ENCODE measurements at regions of chr14 and their contacts with region 1.

Region 1: DNA sequence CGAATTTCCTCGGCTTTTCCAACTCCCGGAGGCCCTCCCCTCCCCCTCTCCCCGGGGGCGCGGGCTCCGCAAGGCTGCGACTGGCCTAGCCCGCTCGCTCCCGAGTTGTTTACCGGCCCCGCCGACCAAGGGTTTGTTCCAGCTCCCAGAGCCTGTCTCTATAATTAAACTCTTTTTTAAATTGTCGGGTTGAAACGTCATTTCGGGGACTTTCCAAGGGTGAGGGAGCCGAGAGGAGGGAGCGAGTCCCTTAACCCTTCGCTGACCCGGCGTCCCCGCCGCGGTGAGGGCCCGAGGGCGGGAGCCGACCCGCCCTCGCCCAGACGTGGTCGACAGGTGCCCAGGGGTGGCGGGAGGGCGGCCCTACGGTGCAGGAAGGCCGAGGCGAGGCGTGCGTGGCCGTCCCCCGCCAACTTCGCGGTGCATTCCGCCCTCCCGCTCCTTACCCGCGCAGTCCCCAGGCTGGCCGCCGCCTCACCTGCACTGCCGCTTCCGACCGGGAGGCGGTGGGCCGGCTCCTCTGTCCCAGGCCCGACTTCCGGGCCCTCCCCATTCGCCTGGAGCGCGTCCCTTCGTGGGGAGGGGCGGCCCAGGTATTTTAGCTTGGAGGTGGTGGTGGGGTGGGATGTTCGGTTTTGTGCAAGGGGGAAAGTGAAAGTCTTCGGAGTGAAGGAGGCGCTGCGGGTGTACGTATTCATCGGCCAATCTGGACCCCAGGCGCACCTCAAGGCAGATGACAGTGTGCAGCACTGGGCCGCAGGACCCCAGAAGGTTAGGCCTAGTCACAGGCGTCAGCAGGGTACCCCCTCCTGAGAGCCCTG is 2.9 kb upstream of the ZFP36L1 start:
- DNase-seq: peak; percentile 59 to 86 (median 78)
- H3K4me3 ChIP-seq: peak overlapping the region; percentile 64 to 97 (median 77)
- H3K4me3 Mint-ChIP-seq: peak overlapping the region; percentile 95 to 100
- H3K27ac ChIP-seq: peak overlapping the region; percentile 97 to 98
- H3K27ac Mint-ChIP-seq: peak overlapping the region; percentile 94 to 100 (median 99)
- H3K4me1 ChIP-seq: peaks cover 20 to 37% of the 10 kb centered on the region in 2 donors
- H3K4me1 Mint-ChIP-seq: peaks cover 23% of the 10 kb centered on the region
- H3K27me3 ChIP-seq: no peaks in the 10 kb centered on the region
- H3K27me3 Mint-ChIP-seq: peaks cover 10 to 23% (median 10%) of the 10 kb centered on the region in 3 donors
- CTCF ChIP-seq: peak; percentile 87

Region 2: DNA sequence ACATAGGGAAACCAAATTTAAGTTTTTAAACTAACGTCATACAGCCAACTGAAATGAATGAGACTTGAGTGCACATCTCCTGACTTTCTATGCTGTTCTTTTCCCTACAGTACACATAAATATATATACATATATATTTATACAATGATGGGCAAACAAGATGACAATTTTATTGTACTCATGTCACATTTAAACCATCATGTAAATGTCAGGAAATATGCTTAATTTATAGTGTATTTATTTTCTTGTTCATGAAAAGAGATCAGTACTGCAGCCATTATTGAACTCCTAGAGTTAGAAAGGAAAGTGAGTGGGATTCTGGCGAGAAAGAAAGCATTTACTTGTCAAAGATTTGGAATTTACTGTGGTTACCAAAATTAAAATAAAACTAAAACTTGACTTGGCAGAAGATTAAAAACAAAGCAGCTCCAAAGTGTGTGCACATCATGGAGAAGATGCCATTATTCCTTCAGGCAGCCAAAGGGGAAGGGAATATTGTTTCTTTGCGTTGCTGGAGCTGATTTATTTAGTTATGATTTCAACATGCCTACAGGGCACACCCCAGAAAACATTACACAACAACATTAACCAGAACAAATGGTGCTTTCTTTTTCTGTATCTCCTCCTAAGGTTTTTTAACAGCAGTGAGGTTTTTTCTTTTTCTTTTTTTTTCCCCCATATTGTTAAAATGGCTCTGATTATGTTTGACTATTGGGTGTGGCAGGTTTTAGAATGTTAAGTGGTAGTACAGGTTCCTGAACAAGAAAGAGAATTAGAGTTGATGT is 831.7 kb before region 1 on chr14:
- intact Hi-C with region 1: loop called in 1 of 2 experiments (anchors 10 kb)
- DNase-seq: peak; percentile 21 to 58 (median 34)
- H3K4me3 ChIP-seq: peak overlapping the region in 1 of 3 experiments; percentile 55
- H3K4me3 Mint-ChIP-seq: peak overlapping the region in 1 of 2 donors; percentile 67
- H3K27ac ChIP-seq: peak overlapping the region in 1 of 2 donors; percentile 72
- H3K27ac Mint-ChIP-seq: peak overlapping the region; percentile 82 to 94 (median 90)
- H3K4me1 ChIP-seq: peaks cover 52 to 61% of the 10 kb centered on the region in 2 donors
- H3K4me1 Mint-ChIP-seq: peaks cover 57% of the 10 kb centered on the region
- H3K27me3 ChIP-seq: no peaks in the 10 kb centered on the region
- H3K27me3 Mint-ChIP-seq: no peaks in the 10 kb centered on the region
- CTCF ChIP-seq: no peak

Region 3: DNA sequence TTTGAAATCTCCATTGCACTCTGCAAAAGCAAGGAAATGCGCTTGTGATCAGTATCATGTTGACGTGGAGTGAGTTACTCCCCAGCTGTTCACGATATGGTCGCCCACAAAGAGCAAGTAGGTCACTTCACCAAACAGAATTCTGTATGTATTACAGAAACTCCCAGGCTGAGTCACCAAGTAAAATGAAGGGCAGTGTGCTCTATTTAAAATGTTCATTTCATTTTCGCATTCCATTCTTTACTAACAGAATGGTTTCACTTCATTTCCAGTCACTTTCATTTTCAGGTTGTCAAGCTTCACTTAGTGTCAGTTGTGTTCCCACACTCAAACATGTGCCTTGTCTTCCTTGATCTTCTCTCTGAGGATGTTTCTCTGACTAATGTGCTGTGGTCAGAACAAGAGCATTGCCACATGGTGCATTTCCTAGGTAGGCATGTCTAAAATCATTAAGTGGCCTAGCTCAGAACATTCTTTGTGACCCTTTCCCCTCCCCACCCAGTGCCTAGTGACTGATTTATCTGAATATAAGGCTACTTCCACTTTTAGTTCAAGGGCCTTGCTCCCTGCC is 585.0 kb before region 1 on chr14:
- intact Hi-C with region 1: loop called (anchors 10 kb)
- DNase-seq: peak; percentile 89 to 95 (median 92)
- H3K4me3 ChIP-seq: peak overlapping the region; percentile 31 to 73 (median 64)
- H3K4me3 Mint-ChIP-seq: peak overlapping the region; percentile 70 to 86
- H3K27ac ChIP-seq: peak overlapping the region in 1 of 2 donors; percentile 88
- H3K27ac Mint-ChIP-seq: peak overlapping the region; percentile 87 to 98 (median 94)
- H3K4me1 ChIP-seq: peaks cover 25 to 28% of the 10 kb centered on the region in 2 donors
- H3K4me1 Mint-ChIP-seq: peaks cover 34% of the 10 kb centered on the region
- H3K27me3 ChIP-seq: no peaks in the 10 kb centered on the region
- H3K27me3 Mint-ChIP-seq: no peaks in the 10 kb centered on the region
- CTCF ChIP-seq: no peak

Region 4: DNA sequence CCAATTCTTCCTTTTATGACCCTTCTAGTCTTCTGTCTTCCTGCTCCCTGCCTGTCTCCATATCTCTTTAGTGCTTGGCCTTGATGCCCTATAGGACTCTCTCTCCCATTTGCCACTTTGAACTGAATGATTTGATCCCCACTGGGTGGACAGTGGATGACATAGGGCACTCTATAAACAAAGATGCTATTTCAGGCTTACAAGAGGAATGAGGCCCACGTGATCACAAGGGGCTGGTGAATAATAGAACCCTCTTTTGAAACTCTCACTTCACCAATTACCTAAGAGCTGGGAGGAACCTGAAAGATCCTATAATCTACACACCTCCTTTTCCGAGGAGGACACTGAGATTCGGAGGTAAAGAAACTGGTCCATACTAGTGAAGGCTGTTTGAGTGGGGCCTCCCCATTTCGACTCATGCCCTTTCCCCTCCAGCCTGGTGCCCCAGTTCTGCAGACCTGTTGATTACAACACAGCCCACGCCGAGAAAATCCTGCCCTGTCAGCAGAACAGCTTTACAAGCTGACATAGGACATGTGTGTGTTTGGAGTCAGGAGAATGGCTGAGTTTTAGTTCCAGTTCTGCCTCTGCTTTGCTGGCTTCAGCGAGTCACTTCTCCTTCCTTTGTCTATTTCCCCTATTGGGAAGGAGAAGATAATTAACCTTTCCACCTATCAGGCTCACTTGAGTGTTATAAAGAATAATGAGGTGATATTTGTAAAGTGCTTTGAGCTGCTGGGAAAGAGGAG is 403.2 kb before region 1 on chr14:
- intact Hi-C with region 1: loop called (anchors 5 to 10 kb)
- DNase-seq: peak; percentile 82 to 88 (median 87)
- H3K4me3 ChIP-seq: peak overlapping the region in 1 of 3 experiments; percentile 45
- H3K4me3 Mint-ChIP-seq: peak overlapping the region in 1 of 2 donors; percentile 68
- H3K27ac ChIP-seq: peak overlapping the region; percentile 81 to 83
- H3K27ac Mint-ChIP-seq: peak overlapping the region; percentile 83 to 99 (median 95)
- H3K4me1 ChIP-seq: peaks cover 57 to 65% of the 10 kb centered on the region in 2 donors
- H3K4me1 Mint-ChIP-seq: peaks cover 65% of the 10 kb centered on the region
- H3K27me3 ChIP-seq: no peaks in the 10 kb centered on the region
- H3K27me3 Mint-ChIP-seq: no peaks in the 10 kb centered on the region
- CTCF ChIP-seq: no peak

Region 5: GRCh38 chr14:68471029-68471963 is 324.5 kb before region 1 on chr14:
- intact Hi-C with region 1: loop called in 1 of 2 experiments (anchors 5 kb)
- DNase-seq: peak in 2 of 3 donors; percentile 32 to 33
- H3K4me3 ChIP-seq: no peak overlapping the region
- H3K4me3 Mint-ChIP-seq: peak overlapping the region in 1 of 2 donors; percentile 78
- H3K27ac ChIP-seq: peak overlapping the region; percentile 41 to 74
- H3K27ac Mint-ChIP-seq: peak overlapping the region; percentile 55 to 92 (median 88)
- H3K4me1 ChIP-seq: peaks cover 53 to 55% of the 10 kb centered on the region in 2 donors
- H3K4me1 Mint-ChIP-seq: peaks cover 72% of the 10 kb centered on the region
- H3K27me3 ChIP-seq: no peaks in the 10 kb centered on the region
- H3K27me3 Mint-ChIP-seq: peaks cover 0 to 1% (median 0%) of the 10 kb centered on the region in 3 donors
- CTCF ChIP-seq: no peak

Region 6: DNA sequence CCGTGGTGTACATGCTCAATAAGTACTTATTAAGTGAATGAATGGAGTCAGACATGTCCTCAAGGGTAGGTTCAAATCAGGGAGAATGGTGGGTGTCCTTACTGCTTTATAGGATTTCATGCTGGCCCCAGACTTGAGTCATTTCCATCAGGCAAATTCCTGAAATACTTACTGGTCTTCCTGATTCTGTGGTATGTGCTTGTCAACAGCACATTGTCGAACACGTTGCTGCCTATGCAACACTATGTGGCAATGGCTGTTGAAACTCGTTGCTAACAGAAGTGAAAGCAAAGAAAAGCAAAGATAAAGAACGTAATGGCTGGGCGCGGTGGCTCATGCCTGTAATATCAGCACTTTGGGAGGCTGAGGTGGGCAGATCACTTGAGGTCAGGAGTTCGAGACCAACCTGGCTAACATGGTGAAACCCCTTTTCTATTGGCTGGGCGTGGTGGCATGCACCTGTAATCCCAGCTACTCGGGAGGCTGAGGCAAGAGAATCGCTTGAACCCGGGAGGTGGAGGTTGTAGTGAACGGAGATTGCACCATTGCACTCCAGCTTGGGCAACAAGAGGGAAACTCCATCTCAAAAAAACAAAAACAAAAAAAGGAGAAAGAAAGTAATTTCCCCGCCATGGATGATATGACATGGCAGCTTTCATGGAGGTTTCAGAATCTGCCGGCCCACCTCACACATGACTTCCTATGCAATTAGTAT is 217.8 kb before region 1 on chr14:
- intact Hi-C with region 1: loop called (anchors 5 kb)
- DNase-seq: peak; percentile 94 to 99 (median 97)
- H3K4me3 ChIP-seq: peak overlapping the region in 1 of 3 experiments; percentile 2
- H3K4me3 Mint-ChIP-seq: peak overlapping the region; percentile 64 to 85
- H3K27ac ChIP-seq: peak overlapping the region; percentile 89 to 92
- H3K27ac Mint-ChIP-seq: peak overlapping the region; percentile 99 to 100 (median 100)
- H3K4me1 ChIP-seq: peaks cover 65 to 68% of the 10 kb centered on the region in 2 donors
- H3K4me1 Mint-ChIP-seq: peaks cover 68% of the 10 kb centered on the region
- H3K27me3 ChIP-seq: no peaks in the 10 kb centered on the region
- H3K27me3 Mint-ChIP-seq: peaks cover 0 to 2% (median 2%) of the 10 kb centered on the region in 3 donors
- CTCF ChIP-seq: no peak

Region 7: DNA sequence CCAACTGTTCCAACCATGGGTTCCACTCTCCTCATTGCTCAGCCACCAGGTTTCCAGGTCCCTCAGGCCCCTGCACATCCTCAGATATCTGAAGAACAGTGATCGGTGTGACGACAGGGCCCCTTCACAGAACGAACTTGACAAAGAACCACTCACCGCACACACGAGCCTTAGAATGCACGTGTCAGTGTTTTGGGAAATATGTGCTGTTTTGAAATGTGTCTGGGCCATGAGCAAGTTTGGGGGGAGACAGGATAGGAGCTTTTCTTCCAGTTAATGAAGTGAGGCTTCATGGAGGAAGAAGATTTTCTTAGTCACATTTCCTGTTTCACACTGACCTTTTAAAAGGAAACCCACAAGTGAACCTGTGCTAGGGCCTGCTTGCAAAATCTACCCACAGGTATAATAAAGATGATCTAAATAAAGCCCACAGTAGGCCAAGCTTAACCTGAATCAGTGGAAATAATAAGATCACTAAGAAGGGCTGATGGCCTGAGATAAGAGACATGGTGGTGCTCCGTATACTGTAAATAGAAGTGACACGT is 61.5 kb before region 1 on chr14:
- intact Hi-C with region 1: loop called in 1 of 2 experiments (anchors 5 kb)
- DNase-seq: peak; percentile 92 to 96 (median 95)
- H3K4me3 ChIP-seq: peak overlapping the region in 1 of 3 experiments; percentile 15
- H3K4me3 Mint-ChIP-seq: peak overlapping the region; percentile 34 to 64
- H3K27ac ChIP-seq: peak overlapping the region; percentile 97 to 99
- H3K27ac Mint-ChIP-seq: peak overlapping the region; percentile 98 to 100 (median 99)
- H3K4me1 ChIP-seq: peaks cover 45 to 50% of the 10 kb centered on the region in 2 donors
- H3K4me1 Mint-ChIP-seq: peaks cover 64% of the 10 kb centered on the region
- H3K27me3 ChIP-seq: peaks cover 20 to 39% of the 10 kb centered on the region in 2 donors
- H3K27me3 Mint-ChIP-seq: peaks cover 46 to 61% (median 46%) of the 10 kb centered on the region in 3 donors
- CTCF ChIP-seq: no peak

Measured in CD14-positive monocyte (primary cell).